ENCODE measurements at regions of chr6 and their contacts with region 1.

Region 1: DNA sequence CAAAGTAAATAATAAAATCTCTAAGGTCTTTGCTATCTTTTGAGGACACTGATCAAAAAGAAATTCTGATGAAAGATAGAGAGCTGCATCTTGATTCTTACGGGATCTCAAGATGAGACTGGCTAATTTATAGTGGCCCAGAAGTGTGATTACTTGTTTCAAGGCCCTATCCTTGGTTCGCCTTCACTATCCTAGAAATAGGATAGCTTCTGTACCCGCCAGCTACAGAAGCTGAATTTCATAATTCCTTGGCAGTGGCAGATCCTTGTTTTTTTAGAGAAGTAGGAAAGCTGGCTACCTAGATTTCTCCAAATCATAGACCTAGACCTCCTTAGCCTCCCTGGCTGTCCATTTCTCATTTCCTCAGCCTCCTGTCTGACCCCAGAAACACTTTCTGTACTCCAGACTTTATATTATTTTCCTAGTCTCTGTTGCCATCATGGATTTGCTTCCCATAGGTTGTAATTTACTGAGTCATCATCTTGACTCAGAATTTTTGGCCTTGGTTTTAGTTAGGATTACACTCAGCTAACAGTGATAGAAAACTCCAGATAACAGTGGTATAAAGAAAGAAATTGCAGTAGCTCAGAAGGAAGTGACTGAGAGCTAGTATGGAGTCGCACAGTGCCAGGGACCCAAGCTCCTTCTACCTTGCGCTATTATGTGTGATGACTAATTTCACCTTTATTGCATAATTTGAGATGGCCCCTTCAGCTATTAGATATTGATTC is 27.7 kb downstream of the PHF3 start:
- DNase-seq: no peak
- ATAC-seq: no peak
- H3K4me3 ChIP-seq: no peak overlapping the region
- H3K4me3 Mint-ChIP-seq: no peak overlapping the region
- H3K27ac ChIP-seq: peak overlapping the region in 1 of 2 donors; percentile 44
- H3K27ac Mint-ChIP-seq: no peak overlapping the region
- H3K4me1 ChIP-seq: peaks cover 9 to 24% of the 10 kb centered on the region in 2 donors
- H3K4me1 Mint-ChIP-seq: peaks cover 67% of the 10 kb centered on the region
- H3K27me3 ChIP-seq: no peaks in the 10 kb centered on the region
- H3K27me3 Mint-ChIP-seq: no peaks in the 10 kb centered on the region
- CTCF ChIP-seq: no peak

Region 2: GRCh38 chr6:63674635-63675034 is 11.3 kb after region 1 on chr6:
- CTCF ChIA-PET with region 1: no interaction called
- POLR2A ChIA-PET with region 1: no interaction called
- intact Hi-C with region 1: loop called (anchors 2 kb)
- DNase-seq: no peak
- ATAC-seq: no peak
- H3K4me3 ChIP-seq: no peak overlapping the region
- H3K4me3 Mint-ChIP-seq: no peak overlapping the region
- H3K27ac ChIP-seq: no peak overlapping the region
- H3K27ac Mint-ChIP-seq: no peak overlapping the region
- H3K4me1 ChIP-seq: peaks cover 13 to 29% of the 10 kb centered on the region in 2 donors
- H3K4me1 Mint-ChIP-seq: peaks cover 38% of the 10 kb centered on the region
- H3K27me3 ChIP-seq: no peaks in the 10 kb centered on the region
- H3K27me3 Mint-ChIP-seq: no peaks in the 10 kb centered on the region
- CTCF ChIP-seq: no peak

Region 3: GRCh38 chr6:63685446-63686379 is 22.4 kb after region 1 on chr6:
- CTCF ChIA-PET with region 1: interaction called, 3 read pairs
- POLR2A ChIA-PET with region 1: interaction called, 15 read pairs
- intact Hi-C with region 1: no loop called
- DNase-seq: peak; percentile 71
- ATAC-seq: peak; percentile 92
- H3K4me3 ChIP-seq: no peak overlapping the region
- H3K4me3 Mint-ChIP-seq: peak overlapping the region; percentile 54
- H3K27ac ChIP-seq: peak overlapping the region; percentile 54 to 59
- H3K27ac Mint-ChIP-seq: peak overlapping the region; percentile 58
- H3K4me1 ChIP-seq: peaks cover 9 to 19% of the 10 kb centered on the region in 2 donors
- H3K4me1 Mint-ChIP-seq: peaks cover 53% of the 10 kb centered on the region
- H3K27me3 ChIP-seq: no peaks in the 10 kb centered on the region
- H3K27me3 Mint-ChIP-seq: no peaks in the 10 kb centered on the region
- CTCF ChIP-seq: no peak

Measured in B cell (primary cell).